ENCODE measurements at regions of chr9 and their contacts with region 1.

Region 1: DNA sequence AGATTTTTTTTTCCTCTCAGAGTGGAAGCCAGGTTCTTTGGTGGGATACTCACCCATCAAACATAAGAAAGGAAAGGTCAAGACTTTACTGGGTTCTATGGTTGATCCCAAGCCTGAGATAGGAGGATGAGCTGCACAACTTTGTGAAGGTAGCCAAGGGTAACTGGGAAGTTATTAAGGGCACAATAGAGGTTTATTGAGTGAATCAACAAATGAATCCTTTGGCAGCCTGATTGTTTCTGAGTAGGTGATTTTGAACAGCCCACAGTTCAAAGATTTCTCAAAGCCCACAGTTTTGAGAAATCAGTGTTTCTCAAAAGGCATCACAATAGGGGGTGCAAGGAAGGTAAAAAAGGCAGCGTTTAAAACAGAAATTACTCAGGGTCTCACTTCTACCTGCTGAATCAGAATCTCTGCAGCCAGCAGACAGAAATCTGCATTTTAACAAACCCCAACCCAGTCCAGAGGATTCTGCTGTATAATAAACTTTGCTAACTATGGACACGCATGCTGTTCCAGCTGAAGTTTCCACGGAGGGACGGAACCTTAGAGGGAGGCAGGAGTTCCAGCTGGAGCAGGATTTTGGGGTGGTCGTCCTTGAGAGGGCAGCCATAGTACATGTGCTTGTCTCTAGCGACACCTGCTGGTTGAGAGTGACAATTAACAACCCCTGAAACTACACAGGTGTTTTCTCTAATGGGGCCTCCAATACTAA is 32.7 kb upstream of the FSD1L start:
- DNase-seq: peak; percentile 45
- ATAC-seq: peak; percentile 84
- H3K4me3 ChIP-seq: no peak overlapping the region
- H3K27ac ChIP-seq: no peak overlapping the region
- H3K4me1 ChIP-seq: no peaks in the 10 kb centered on the region
- H3K27me3 ChIP-seq: no peaks in the 10 kb centered on the region
- CTCF ChIP-seq: peak; percentile 82

Region 2: GRCh38 chr9:104780799-104781395 is 634.2 kb before region 1 on chr9:
- CTCF ChIA-PET with region 1: no interaction called
- POLR2A ChIA-PET with region 1: no interaction called
- in situ Hi-C with region 1: no loop called
- intact Hi-C with region 1: loop called (anchors 2 kb)
- DNase-seq: no peak
- ATAC-seq: no peak; the same call in 1 of the 2 replicates
- H3K4me3 ChIP-seq: no peak overlapping the region
- H3K27ac ChIP-seq: no peak overlapping the region
- H3K4me1 ChIP-seq: no peaks in the 10 kb centered on the region
- H3K27me3 ChIP-seq: no peaks in the 10 kb centered on the region
- CTCF ChIP-seq: peak; percentile 52; the same call in 1 of the 2 replicates

Region 3: DNA sequence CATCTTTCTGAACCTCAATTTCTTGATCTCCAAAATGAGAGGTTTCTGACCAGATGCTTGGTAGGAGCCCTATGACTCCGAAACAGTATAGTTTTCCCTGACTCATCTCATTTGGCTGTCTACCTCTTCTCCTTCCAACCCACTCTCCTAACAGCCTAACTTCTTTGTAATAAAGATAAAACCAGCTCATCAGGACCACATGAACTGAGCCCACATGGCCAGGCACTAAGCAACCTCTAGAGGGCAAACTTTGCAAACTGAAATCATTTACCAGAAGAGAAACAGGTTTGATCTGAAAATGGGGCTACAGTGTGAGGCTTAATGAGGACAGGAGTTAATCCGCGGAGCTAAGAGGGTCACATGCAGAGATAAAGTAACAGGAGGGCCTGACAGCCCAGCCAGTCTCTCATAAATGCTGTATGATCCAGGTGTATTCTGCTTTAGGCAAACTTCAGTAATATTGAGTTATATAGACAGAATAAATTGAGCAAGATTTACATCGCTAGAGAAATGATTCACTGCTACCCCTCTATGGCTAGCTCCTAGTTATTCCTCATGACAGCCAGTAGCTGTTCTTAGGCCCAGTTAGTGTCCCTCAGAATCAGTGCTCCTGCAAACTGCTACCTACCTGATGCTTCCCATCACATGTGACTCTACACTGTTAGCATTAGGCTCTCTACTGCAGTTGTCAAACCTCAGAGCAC is 551.8 kb before region 1 on chr9:
- CTCF ChIA-PET with region 1: no interaction called
- POLR2A ChIA-PET with region 1: no interaction called
- in situ Hi-C with region 1: no loop called
- intact Hi-C with region 1: loop called (anchors 5 kb)
- DNase-seq: peak; percentile 61
- ATAC-seq: peak; percentile 87
- H3K4me3 ChIP-seq: no peak overlapping the region
- H3K27ac ChIP-seq: no peak overlapping the region
- H3K4me1 ChIP-seq: no peaks in the 10 kb centered on the region
- H3K27me3 ChIP-seq: no peaks in the 10 kb centered on the region
- CTCF ChIP-seq: peak; percentile 79

Region 4: DNA sequence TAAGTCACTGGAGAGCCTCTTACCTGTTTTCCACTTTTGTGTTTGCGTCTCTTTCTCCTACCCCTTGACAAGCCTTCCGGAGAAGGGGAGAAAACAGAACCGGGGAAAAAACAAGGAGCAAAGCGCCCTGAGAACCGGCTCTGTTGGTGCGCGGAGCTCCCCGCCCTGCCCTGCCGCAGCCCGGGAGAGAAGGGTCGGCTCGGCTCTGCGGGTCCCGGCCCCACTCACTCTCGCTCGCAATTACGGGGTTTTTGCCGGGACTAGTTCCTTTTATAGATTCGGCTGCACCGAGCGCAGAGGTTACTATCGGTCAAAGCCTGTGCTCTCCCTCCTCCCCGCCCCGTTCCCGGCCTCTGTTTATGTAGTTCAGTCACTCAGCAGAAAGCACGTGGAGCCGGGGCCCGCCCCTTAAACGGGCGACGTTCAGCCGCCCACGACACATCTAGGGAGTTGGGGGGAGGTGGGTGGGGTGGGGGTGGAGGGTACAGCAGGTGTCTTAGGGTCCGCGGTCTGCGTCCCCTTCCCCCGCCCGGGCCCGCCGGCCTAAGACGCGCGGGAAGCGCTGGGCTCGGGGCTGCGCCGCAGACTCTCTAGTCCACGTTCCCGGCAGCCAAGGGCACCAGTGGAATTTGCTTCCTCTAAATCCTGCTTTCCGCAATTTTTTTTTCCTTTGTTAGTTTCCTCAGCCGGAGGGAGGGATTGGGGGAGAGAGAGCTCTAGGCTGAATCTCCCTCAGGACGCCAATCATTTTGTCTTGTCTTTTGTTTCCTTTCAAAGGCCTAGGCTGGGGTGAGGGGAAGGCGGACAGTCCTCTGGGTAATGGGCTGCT is 487.0 kb before region 1 on chr9 and contains the start of gene ABCA1:
- CTCF ChIA-PET with region 1: no interaction called
- POLR2A ChIA-PET with region 1: no interaction called
- in situ Hi-C with region 1: no loop called
- intact Hi-C with region 1: loop called (anchors 2 kb)
- DNase-seq: no peak
- ATAC-seq: peak; percentile 76
- H3K4me3 ChIP-seq: peak within 1 kb of the TSS; percentile 52 to 85
- H3K27ac ChIP-seq: no peak within 1 kb of the TSS
- H3K4me1 ChIP-seq: no peaks in the 10 kb centered on the region
- H3K27me3 ChIP-seq: no peaks in the 10 kb centered on the region
- CTCF ChIP-seq: no peak
- total RNA-seq, gene ABCA1: 2.6 TPM

Region 5: GRCh38 chr9:105157130-105157583 is 257.9 kb before region 1 on chr9:
- CTCF ChIA-PET with region 1: interaction called, 3 read pairs
- POLR2A ChIA-PET with region 1: no interaction called
- in situ Hi-C with region 1: no loop called
- intact Hi-C with region 1: loop called (anchors 2 kb)
- DNase-seq: no peak
- ATAC-seq: peak; percentile 91
- H3K4me3 ChIP-seq: no peak overlapping the region
- H3K27ac ChIP-seq: no peak overlapping the region
- H3K4me1 ChIP-seq: no peaks in the 10 kb centered on the region
- H3K27me3 ChIP-seq: no peaks in the 10 kb centered on the region
- CTCF ChIP-seq: peak; percentile 53

Region 6: DNA sequence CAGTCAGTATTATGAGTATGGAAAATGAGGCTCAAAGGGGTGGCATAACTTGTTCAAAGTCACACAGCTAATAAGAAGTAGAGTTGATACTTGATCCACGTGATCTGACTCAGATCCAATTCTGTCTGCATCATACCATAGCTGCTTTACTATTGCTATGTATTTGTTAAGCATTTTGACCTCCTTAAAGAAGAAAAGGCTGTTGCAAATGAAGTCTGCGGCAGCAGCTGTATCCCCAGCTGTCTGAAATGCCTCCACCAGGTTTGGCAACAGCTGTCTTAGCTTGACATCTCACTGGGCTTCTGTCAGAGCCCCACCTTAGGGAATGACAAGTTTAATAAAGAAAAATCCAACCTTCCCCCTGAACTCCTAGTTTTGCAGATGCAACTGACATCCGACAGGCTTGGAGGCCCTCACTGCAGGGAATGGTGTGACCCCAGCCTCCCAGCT is 246.2 kb before region 1 on chr9:
- CTCF ChIA-PET with region 1: no interaction called
- POLR2A ChIA-PET with region 1: no interaction called
- in situ Hi-C with region 1: no loop called
- intact Hi-C with region 1: no loop called
- DNase-seq: no peak
- ATAC-seq: no peak
- H3K4me3 ChIP-seq: no peak overlapping the region
- H3K27ac ChIP-seq: no peak overlapping the region
- H3K4me1 ChIP-seq: no peaks in the 10 kb centered on the region
- H3K27me3 ChIP-seq: no peaks in the 10 kb centered on the region
- CTCF ChIP-seq: no peak

Region 7: DNA sequence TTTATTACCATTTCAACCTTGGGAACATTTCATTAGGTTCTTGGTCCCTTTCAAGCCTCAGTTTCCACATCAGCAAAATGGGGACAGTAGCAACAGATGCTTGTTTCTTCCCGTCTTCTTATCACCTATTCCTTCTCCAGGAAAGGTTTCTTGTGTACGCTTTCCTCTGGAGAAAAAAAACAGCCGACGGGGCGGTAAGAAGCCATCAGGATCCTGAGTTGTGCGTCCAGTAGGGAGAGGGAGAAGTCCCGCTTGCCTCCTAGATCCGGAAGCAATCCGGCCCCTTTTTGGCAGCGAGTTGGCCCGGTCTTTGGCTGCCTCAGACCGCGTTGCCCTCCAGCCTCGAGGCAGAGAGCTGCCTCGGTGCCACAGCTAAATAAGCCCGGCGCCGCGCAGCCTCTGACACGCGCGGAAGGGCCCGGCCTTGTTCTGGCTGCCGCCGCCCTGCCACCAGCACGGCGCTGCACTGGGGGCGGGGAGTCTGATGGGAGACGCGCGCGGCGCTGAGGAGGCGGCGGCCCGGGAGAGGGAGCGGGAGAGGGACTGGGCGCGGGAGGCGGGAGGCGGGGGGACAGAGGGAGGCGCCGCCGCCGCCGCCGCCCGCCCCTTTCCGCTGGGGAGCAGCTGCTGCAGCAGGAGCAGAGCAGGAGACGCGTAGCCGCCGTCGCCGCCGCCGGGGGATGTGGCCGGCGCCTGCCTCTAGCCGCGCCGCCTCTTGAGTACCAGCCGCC is 170.9 kb before region 1 on chr9 and contains the start of gene SLC44A1:
- CTCF ChIA-PET with region 1: interaction called, 3 read pairs
- POLR2A ChIA-PET with region 1: no interaction called
- in situ Hi-C with region 1: no loop called
- intact Hi-C with region 1: loop called (anchors 10 kb)
- DNase-seq: peak; percentile 35
- ATAC-seq: peak; percentile 98
- H3K4me3 ChIP-seq: peak within 1 kb of the TSS; percentile 54 to 61
- H3K27ac ChIP-seq: peak within 1 kb of the TSS; percentile 77
- H3K4me1 ChIP-seq: peaks cover 3% of the 10 kb centered on the region; the same call in 1 of the 2 replicates
- H3K27me3 ChIP-seq: no peaks in the 10 kb centered on the region; the same call in none of the 2 replicates
- CTCF ChIP-seq: no peak
- total RNA-seq, gene SLC44A1: 8.7 TPM

Region 8: GRCh38 chr9:105973951-105974351 is 558.8 kb after region 1 on chr9:
- CTCF ChIA-PET with region 1: no interaction called
- POLR2A ChIA-PET with region 1: no interaction called
- in situ Hi-C with region 1: no loop called
- intact Hi-C with region 1: no loop called
- DNase-seq: no peak
- ATAC-seq: no peak
- H3K4me3 ChIP-seq: no peak overlapping the region
- H3K27ac ChIP-seq: no peak overlapping the region
- H3K4me1 ChIP-seq: no peaks in the 10 kb centered on the region
- H3K27me3 ChIP-seq: no peaks in the 10 kb centered on the region
- CTCF ChIP-seq: no peak